Activated CD8-positive, alpha-beta T cell treated with anti-CD3 and anti-CD28 coated beads, Interleukin-2, amount 10 ng/mL, durations not matched to agents 7 days and 5 days (primary cell): ENCODE measurements at regions of chr11 and their contacts with region 1.

Region 1: DNA sequence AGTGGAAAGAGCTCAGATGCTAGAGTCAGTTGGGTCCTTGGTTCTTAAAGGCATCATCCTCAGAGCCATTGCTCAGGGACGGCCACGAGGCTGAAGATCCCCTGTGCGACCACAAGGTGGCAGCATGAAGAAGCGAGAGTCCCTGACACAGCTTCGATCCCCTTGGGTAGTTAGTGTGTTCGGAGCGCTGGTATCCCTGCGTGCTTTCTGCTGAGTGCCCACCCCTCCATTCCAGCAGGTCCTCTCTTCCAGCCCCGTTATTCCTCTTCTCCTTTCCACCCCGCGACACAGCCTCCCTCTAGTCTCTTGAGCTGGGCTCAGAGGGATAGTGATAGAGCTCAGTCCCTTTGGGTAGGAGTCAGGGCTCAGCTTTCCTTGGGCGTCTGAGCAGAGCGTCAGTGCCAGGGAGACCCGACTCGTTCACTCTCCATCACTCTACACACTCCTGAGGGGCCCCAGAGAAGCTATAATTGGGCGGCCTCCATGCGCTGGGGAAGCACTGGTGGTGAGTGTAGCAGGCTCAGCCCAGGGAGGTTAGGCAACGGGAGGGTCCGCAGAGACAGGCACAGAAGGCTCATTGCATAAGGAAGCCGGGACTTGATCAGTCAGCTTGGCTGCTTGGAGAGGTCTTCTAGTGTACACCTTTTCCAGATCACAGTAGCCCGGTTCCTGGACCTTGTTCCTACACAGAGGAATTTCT is at the start of gene OR51D1:
- DNase-seq: peak; percentile 75
- ATAC-seq: peak; percentile 97
- H3K4me3 Mint-ChIP-seq: no peak within 1 kb of the TSS
- H3K27ac Mint-ChIP-seq: no peak within 1 kb of the TSS
- H3K4me1 Mint-ChIP-seq: no peaks in the 10 kb centered on the region
- H3K27me3 Mint-ChIP-seq: peaks cover 3% of the 10 kb centered on the region
- total RNA-seq, gene OR51D1: not detected

Region 2: GRCh38 chr11:4607781-4608666 is 29.1 kb before region 1 on chr11 and contains the start of gene TRIM68:
- CTCF ChIA-PET with region 1: interaction called, 23 read pairs
- POLR2A ChIA-PET with region 1: no interaction called
- DNase-seq: peak; percentile 95
- ATAC-seq: peak; percentile 100
- H3K4me3 Mint-ChIP-seq: peak within 1 kb of the TSS; percentile 92
- H3K27ac Mint-ChIP-seq: peak within 1 kb of the TSS; percentile 91
- H3K4me1 Mint-ChIP-seq: peaks cover 39% of the 10 kb centered on the region
- H3K27me3 Mint-ChIP-seq: no peaks in the 10 kb centered on the region
- total RNA-seq, gene TRIM68: 10.8 to 12.3 TPM

Region 3: DNA sequence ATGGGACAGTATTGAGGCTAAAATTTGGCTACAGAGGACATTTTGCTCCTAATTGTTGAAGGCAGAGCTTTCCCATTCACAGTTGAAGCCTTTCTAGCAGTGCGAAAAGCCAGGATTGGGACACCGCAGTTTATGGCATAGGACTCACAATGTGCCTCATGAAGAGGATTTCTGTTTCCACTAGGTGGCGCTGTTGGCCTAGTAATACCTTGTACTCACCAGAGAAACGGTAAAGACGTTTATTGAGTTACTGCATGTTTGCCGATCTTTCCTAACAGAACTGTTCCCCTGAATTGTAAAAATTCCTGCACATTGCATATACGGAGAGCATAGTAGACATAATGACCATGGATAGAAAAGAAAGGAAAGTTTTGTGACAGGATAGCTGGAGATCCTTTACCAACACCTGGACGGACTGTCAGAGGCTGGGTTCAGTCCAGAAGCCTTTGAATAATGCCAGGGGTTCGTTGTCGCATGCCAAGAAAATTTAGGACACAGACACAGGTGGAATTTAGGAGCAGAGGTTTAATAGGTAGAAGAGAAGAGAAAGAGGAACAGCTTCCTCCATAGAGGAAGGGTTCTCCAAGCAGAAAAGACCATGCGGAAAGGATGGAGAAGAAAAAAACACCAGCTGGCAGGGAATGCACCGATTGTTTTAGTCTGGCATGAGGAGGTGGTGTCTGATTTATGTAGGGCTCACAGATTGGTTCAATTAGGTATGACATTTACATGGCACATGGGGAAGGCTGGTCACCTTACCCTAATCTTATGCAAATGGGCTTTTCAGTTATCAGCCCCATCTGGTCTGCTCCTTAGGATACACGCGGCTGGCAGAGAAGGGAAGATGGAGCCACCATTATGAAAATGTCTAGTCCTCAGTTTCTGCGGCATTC is 10.7 kb before region 1 on chr11:
- CTCF ChIA-PET with region 1: interaction called, 26 read pairs
- POLR2A ChIA-PET with region 1: no interaction called
- DNase-seq: peak; percentile 82
- ATAC-seq: peak; percentile 57
- H3K4me3 Mint-ChIP-seq: no peak overlapping the region
- H3K27ac Mint-ChIP-seq: no peak overlapping the region
- H3K4me1 Mint-ChIP-seq: no peaks in the 10 kb centered on the region
- H3K27me3 Mint-ChIP-seq: peaks cover 32% of the 10 kb centered on the region

Region 4: DNA sequence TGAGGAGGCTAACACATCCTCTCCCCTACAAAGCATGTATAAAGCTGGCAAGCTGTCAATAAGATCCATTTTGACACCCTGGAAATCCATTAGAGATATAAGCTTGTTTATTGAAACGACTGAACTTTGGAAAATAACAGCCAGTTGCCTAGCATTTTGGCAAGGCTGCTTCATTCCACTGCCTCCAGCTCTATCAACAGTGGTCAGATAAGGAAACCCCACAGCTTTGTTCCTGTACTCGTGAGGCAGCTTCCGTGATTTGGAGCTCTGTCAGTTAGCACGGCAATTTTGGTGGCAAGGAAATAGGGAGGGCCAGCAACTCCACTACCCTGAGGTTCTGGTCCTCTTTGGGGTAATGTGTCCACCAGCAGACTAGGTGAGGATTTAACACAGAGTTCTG is 213.9 kb after region 1 on chr11:
- CTCF ChIA-PET with region 1: no interaction called
- POLR2A ChIA-PET with region 1: no interaction called
- DNase-seq: no peak
- ATAC-seq: no peak
- H3K4me3 Mint-ChIP-seq: no peak overlapping the region
- H3K27ac Mint-ChIP-seq: no peak overlapping the region
- H3K4me1 Mint-ChIP-seq: no peaks in the 10 kb centered on the region
- H3K27me3 Mint-ChIP-seq: no peaks in the 10 kb centered on the region